HEK293 (cell line): ENCODE measurements at regions of chr15 and their contacts with region 1.

Region 1: GRCh38 chr15:82108489-82109078 is 62.8 kb upstream of the MEX3B start:
- H3K4me3 ChIP-seq: no peak overlapping the region
- H3K27ac ChIP-seq: no peak overlapping the region
- H3K4me1 ChIP-seq: no peaks in the 10 kb centered on the region
- CTCF ChIP-seq: peak; percentile 86

Region 2: DNA sequence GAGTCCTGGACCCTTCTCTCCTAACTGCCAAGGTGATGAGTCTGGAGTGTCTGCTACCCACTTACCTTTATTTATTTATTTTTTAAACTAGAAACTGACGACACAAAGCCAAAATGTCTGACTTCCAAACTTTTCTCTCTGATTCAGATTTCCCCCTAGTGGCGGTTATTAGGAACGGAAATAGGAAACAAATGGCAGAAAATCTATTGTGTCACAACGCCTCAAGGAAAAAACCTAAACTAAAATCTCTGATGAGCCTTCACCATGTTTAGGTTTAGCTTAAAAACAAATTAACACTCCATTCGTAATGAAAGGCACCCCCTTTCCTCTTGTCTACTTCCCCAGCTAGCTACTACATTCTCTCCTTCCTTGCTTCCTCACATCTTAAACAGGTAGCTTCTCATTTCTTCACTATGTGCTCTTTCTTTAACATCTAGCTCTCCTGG is 31.3 kb after region 1 on chr15:
- CTCF ChIA-PET with region 1: interaction called, 31 read pairs
- POLR2A ChIA-PET with region 1: no interaction called
- H3K4me3 ChIP-seq: no peak overlapping the region
- H3K27ac ChIP-seq: no peak overlapping the region
- H3K4me1 ChIP-seq: no peaks in the 10 kb centered on the region
- CTCF ChIP-seq: peak; percentile 28; the same call in 1 of the 2 replicates

Region 3: GRCh38 chr15:82197733-82198594 is 89.4 kb after region 1 on chr15:
- CTCF ChIA-PET with region 1: interaction called, 12 read pairs
- POLR2A ChIA-PET with region 1: no interaction called
- H3K4me3 ChIP-seq: no peak overlapping the region
- H3K27ac ChIP-seq: no peak overlapping the region
- H3K4me1 ChIP-seq: no peaks in the 10 kb centered on the region
- CTCF ChIP-seq: peak; percentile 53; the same call in 1 of the 2 replicates

Region 4: DNA sequence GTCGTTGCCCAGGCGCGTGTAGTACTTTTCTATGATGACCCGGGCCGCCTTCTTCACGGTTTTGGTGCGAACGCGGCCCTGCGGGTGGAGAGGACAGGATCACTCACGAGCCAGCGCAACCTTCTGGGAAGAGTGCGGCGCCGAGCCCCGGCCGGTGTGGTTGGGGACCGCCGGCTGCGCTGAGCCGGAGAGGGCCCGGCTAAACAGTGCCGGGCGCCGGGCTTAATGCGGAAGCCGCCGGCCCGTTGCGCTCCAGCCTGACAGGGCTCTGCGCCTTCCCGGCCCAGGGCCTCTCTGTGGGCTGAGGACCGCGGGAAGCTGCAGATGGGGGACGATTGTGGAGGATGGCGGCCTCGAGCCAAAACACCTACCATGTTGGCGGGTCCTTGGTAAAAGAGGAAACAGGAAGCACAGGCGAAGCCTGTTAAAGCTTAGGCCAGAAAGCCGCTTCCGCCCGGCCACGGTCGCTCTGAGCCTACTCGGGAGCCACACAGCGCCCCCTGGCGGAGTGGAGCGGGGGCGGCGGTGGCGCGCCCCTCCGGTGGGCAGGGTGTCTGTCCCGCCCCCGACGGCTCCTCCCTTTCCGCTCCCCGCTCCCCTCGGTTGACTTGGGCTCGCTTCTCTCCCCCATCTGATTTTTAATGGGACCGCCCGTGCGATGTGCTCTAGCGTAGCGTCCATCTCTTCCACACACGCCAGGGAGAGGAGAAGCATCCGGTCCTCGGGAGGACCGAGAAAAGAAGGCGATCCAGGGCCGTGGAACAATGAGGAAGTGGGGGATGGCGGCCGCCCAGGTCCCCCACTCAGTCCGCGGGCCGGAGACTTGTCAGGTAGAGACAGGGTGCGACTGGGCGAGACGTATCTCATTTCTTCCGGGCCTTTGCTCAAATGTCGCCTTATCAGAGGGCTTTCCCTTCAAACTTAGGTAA is 431.7 kb after region 1 on chr15 and contains the start of gene RPS17:
- CTCF ChIA-PET with region 1: no interaction called
- POLR2A ChIA-PET with region 1: no interaction called
- H3K4me3 ChIP-seq: peak within 1 kb of the TSS; percentile 78
- H3K27ac ChIP-seq: peak within 1 kb of the TSS; percentile 98
- H3K4me1 ChIP-seq: peaks cover 6% of the 10 kb centered on the region
- CTCF ChIP-seq: peak; percentile 99